Activated T-helper 2 cell treated with anti-CD3 and anti-CD28 coated beads, Interferon-gamma antibody, Interleukin-2, Interleukin-4, amounts not matched to agents 10 μg/mL and 5 μg/mL and 100 μg/mL, durations not matched to agents 14 hours and 24 hours and 36 hours (primary cell): ENCODE measurements at regions of chr14 and their contacts with region 1.

Region 1: GRCh38 chr14:35416108-35416750 is 11.7 kb upstream of the NFKBIA start:
- DNase-seq: peak; percentile 52
- H3K4me3 Mint-ChIP-seq: peak overlapping the region; percentile 72
- H3K27ac Mint-ChIP-seq: peak overlapping the region; percentile 95
- H3K4me1 Mint-ChIP-seq: peaks cover 52% of the 10 kb centered on the region
- H3K27me3 Mint-ChIP-seq: no peaks in the 10 kb centered on the region

Region 2: DNA sequence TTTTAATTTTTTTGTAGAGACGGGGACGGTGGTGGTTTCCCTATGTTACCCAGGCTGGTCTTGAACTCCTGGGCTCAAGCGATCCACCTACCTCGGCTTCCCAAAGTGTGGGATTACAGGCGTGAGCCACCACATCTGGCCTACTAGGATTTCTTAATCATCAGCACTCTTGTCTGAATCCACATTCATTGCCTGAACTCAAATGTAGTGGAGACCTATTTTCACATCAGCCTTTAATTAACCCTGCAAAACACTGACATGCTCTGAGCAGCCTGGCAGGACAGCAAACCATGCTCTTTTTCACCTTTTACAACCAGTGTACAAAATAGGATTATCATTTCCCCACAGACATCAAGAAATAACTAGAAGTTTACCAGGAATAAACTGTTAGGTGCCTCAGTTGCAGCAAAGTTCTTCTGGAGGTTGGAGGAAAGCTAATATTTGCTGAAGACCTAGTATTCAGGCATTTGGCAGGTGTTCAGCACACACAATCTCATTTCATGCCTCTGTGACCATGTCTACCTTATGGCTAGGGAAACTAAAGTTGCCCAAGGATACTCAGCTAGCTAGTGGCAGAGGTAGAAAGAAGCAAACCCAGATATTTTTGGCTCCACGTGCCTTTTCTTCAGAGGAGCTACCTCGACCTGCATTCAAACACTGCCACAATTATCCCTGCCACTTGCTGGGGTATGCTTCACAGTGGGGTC is 739.6 kb before region 1 on chr14:
- intact Hi-C with region 1: loop called (anchors 5 kb)
- DNase-seq: no peak
- H3K4me3 Mint-ChIP-seq: no peak overlapping the region
- H3K27ac Mint-ChIP-seq: no peak overlapping the region
- H3K4me1 Mint-ChIP-seq: peaks cover 3% of the 10 kb centered on the region
- H3K27me3 Mint-ChIP-seq: no peaks in the 10 kb centered on the region

Region 3: DNA sequence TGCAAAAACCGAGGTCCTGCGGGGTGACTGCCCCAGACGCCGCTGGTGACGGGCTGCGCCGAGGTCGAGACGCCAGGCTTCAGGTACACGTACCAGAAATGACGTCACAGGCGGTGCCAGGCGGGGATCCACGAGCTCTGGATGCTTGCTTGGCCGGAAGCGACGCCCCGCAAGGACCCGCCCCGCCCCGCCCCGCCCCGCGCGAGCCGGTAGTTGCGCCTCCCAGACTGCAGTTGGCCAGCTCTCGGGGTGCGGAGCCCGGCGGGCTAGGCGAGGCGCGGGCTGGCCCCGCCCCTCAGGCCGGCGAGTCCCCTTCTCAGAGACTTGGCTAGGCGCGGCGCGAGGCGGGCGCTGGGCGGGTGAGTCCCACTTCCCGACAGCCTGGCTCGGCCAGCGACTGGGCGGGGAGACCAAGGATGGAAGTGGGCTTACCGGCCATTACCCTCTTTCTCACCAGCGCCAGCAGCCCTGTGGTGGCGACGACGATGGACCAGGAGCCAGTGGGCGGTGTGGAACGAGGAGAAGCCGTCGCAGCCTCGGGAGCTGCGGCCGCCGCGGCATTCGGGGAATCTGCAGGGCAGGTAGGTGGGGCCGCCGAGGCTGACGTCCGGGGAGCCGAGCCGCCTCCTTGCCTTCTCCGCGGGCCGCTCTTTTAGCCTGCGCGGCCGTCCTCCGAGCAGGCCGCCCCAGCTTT is 370.0 kb before region 1 on chr14 and contains the start of gene FAM177A1:
- intact Hi-C with region 1: loop called (anchors 1 kb)
- DNase-seq: peak; percentile 97
- H3K4me3 Mint-ChIP-seq: peak within 1 kb of the TSS; percentile 98
- H3K27ac Mint-ChIP-seq: peak within 1 kb of the TSS; percentile 98
- H3K4me1 Mint-ChIP-seq: peaks cover 21% of the 10 kb centered on the region
- H3K27me3 Mint-ChIP-seq: no peaks in the 10 kb centered on the region
- total RNA-seq, gene FAM177A1: 41.3 and 43.2 TPM in 2 replicates

Region 4: DNA sequence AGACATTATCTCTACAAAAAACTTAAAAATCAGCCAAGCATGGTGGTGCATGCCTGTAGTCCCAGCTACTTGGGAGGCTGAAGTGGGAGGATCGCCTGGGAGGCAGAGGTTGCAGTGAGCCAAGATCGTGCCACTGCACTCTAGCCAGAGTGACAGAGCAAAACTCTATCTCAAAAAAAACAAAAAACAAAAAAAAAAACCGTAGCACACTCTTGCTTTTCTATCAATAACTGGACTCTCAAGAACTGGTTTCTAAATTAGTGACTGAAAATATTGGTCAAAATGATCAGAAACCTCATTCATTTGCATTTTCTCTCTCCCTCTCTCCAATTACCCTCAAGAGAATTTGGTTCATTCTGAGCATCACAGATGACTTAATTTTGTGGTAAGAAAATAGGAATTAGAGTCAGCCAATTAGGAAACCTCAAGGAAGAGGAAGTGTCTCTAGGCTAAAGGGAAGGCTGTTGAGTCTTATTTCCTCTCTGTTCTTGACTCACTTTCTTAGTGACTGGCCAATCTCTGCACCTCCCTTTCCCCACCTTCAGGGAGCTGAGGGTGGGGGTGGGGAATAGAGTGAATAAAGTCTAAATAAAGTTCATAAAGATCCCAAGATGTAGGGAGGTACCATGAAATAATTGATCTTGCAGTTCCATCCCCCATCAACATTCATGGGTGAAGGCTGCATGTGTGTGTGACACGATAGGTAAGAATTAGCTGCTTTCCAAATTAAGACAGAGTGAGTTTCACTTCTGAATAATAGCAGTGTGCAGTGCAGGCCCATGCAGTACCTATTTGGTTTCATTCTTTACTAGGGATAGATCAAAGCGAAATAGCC is 130.8 kb before region 1 on chr14:
- intact Hi-C with region 1: loop called (anchors 1 kb)
- DNase-seq: no peak
- H3K4me3 Mint-ChIP-seq: peak overlapping the region; percentile 55
- H3K27ac Mint-ChIP-seq: peak overlapping the region; percentile 82
- H3K4me1 Mint-ChIP-seq: peaks cover 41% of the 10 kb centered on the region
- H3K27me3 Mint-ChIP-seq: no peaks in the 10 kb centered on the region

Region 5: DNA sequence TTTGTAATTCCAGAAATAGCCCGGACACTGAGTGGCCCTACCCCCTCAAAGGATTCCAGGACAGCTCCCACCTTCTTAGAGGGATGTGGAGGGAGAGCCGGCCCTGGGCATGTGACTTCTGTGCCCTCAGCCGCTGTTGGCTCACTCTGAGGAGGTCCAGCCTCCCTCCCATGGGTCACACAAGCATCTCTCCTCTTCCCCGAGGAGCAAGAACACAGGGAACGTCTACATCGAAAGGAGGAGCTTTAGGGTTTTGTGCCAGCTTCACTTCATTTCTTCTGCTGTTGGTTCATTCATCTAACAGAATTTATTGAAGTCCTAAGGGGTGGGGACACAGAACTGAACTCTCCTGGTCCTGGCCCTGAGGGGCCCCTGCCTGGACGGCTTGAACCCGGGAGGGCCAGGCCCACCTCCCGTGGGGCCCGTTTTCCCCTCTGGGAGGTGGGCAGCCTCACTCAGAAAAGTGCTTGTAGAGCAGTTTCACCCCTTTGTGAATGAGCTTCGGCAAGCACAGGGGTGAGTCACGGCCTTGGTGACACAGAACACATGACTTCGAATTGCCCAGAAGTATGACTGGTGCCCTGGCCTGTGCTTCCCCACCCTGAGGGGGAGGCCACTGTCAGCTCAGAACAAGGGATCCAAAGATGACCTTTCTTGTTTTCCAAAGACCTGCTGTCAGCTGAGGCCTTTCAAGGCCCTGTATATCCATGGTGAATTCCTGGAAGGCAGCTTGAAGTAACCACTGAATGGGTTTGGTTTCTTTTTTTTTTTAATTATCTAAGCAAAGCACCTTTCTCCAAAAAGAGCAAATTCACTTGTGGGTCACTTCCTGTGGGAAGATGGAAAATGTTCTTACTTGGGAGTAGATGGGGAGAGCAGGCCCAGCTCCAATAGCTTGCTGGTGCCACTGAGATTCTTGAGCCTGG is 50.8 kb before region 1 on chr14:
- intact Hi-C with region 1: loop called (anchors 5 kb)
- DNase-seq: peak; percentile 38
- H3K4me3 Mint-ChIP-seq: peak overlapping the region; percentile 64
- H3K27ac Mint-ChIP-seq: peak overlapping the region; percentile 97
- H3K4me1 Mint-ChIP-seq: peaks cover 42% of the 10 kb centered on the region
- H3K27me3 Mint-ChIP-seq: no peaks in the 10 kb centered on the region

Region 6: DNA sequence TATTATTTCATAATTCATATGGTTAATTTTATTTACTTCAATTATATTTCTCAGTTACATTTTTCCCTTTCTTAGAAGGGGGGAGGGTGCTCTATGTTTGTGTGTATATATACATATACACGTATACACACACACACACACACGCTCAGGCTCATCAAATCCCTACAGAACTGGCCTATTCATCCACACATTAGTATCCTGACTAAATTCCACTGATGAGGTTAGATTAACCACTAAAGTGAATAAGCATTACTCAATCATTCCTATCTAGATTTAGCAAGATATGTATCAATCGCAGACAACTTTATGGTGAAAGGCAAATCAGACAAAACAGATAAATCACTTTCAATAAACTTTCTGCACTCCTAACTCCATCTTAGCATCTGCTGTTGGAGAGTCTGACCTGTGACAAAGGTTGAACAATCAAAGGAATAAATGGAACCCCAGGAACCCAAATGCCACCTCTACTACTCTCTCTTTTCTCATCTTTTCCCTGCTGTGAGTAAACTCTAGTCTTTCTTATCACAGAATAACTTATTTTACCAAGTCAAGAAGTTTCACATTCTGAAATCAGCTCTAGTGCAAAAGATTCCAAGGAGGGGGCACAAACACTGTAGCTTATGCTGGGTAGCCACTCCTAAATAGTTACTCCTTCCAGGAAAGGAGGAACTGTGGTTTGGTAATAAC is 325.3 kb after region 1 on chr14:
- intact Hi-C with region 1: loop called (anchors 5 kb)
- DNase-seq: no peak
- H3K4me3 Mint-ChIP-seq: no peak overlapping the region
- H3K27ac Mint-ChIP-seq: peak overlapping the region; percentile 54
- H3K4me1 Mint-ChIP-seq: peaks cover 22% of the 10 kb centered on the region
- H3K27me3 Mint-ChIP-seq: peaks cover 3% of the 10 kb centered on the region

Region 7: GRCh38 chr14:35776823-35777222 is 360.6 kb after region 1 on chr14:
- intact Hi-C with region 1: no loop called
- DNase-seq: no peak
- H3K4me3 Mint-ChIP-seq: no peak overlapping the region
- H3K27ac Mint-ChIP-seq: no peak overlapping the region
- H3K4me1 Mint-ChIP-seq: no peaks in the 10 kb centered on the region
- H3K27me3 Mint-ChIP-seq: no peaks in the 10 kb centered on the region